Naive thymus-derived CD4-positive, alpha-beta T cell (primary cell): ENCODE measurements at regions of chr22 and their contacts with region 1.

Region 1: GRCh38 chr22:27919222-27919941 is at the start of gene PITPNB:
- DNase-seq: peak; percentile 97 to 100 (median 99)
- ATAC-seq: peak; percentile 95
- H3K4me3 ChIP-seq: peak within 1 kb of the TSS; percentile 84
- H3K4me3 Mint-ChIP-seq: peak within 1 kb of the TSS; percentile 97 to 100 (median 99)
- H3K27ac ChIP-seq: peak within 1 kb of the TSS; percentile 94
- H3K27ac Mint-ChIP-seq: peak within 1 kb of the TSS; percentile 93 to 99 (median 99)
- H3K4me1 ChIP-seq: peaks cover 29 to 32% of the 10 kb centered on the region in 2 donors
- H3K4me1 Mint-ChIP-seq: peaks cover 56 to 85% (median 75%) of the 10 kb centered on the region in 7 donors
- H3K27me3 ChIP-seq: no peaks in the 10 kb centered on the region
- H3K27me3 Mint-ChIP-seq: peaks cover 0 to 4% (median 0%) of the 10 kb centered on the region in 5 donors
- total RNA-seq, gene PITPNB: 56.3 to 98.8 (median 62.8) TPM

Region 2: DNA sequence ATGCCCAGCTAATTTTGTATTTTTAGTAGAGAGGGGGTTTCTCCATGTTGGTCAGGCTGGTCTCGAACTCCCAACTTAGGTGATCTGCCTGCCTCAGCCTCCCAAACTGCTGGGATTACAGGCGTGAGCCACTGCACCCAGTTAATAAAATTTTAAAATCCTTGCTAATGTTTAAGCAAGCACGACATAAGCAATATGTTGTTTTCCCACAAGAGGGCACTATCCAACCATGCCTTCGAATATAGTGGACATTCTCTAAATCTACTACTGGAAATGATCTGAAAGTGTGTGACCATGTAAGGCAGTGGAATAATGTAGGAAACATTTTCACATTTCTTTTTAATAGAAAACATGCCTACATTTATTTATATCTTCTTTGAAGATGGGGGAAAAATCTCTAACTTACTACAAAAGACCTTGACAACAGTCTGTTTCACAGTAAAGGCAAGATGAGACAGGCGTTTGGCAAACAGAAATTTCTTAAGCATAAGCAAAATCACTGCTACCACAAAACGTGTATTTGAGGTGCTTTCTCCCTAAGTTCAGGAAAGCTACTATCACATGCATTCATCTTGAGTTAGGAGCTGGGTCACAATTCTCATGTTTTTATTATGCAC is 38.5 kb before region 1 on chr22:
- CTCF ChIA-PET with region 1: interaction called, 3 read pairs
- POLR2A ChIA-PET with region 1: no interaction called
- intact Hi-C with region 1: loop called (anchors 2 to 5 kb)
- DNase-seq: peak in 5 of 9 donors; percentile 26 to 38 (median 38)
- ATAC-seq: peak; percentile 76
- H3K4me3 ChIP-seq: no peak overlapping the region
- H3K4me3 Mint-ChIP-seq: no peak overlapping the region
- H3K27ac ChIP-seq: no peak overlapping the region
- H3K27ac Mint-ChIP-seq: peak overlapping the region in 2 of 9 donors; percentile 2 to 11
- H3K4me1 ChIP-seq: peaks cover 0 to 13% of the 10 kb centered on the region in 2 donors
- H3K4me1 Mint-ChIP-seq: peaks cover 2 to 37% (median 24%) of the 10 kb centered on the region in 7 donors
- H3K27me3 ChIP-seq: no peaks in the 10 kb centered on the region
- H3K27me3 Mint-ChIP-seq: no peaks in the 10 kb centered on the region

Region 3: GRCh38 chr22:27885977-27886842 is 33.2 kb before region 1 on chr22:
- CTCF ChIA-PET with region 1: interaction called, 3 read pairs
- POLR2A ChIA-PET with region 1: interaction called, 3 read pairs
- intact Hi-C with region 1: loop called (anchors 2 to 5 kb)
- DNase-seq: peak in 7 of 9 donors; percentile 21 to 53 (median 36)
- ATAC-seq: peak; percentile 67
- H3K4me3 ChIP-seq: no peak overlapping the region
- H3K4me3 Mint-ChIP-seq: no peak overlapping the region
- H3K27ac ChIP-seq: no peak overlapping the region
- H3K27ac Mint-ChIP-seq: peak overlapping the region in 2 of 9 donors; percentile 18 to 33
- H3K4me1 ChIP-seq: no peaks in the 10 kb centered on the region
- H3K4me1 Mint-ChIP-seq: peaks cover 0 to 18% (median 6%) of the 10 kb centered on the region in 7 donors
- H3K27me3 ChIP-seq: no peaks in the 10 kb centered on the region
- H3K27me3 Mint-ChIP-seq: no peaks in the 10 kb centered on the region

Region 4: DNA sequence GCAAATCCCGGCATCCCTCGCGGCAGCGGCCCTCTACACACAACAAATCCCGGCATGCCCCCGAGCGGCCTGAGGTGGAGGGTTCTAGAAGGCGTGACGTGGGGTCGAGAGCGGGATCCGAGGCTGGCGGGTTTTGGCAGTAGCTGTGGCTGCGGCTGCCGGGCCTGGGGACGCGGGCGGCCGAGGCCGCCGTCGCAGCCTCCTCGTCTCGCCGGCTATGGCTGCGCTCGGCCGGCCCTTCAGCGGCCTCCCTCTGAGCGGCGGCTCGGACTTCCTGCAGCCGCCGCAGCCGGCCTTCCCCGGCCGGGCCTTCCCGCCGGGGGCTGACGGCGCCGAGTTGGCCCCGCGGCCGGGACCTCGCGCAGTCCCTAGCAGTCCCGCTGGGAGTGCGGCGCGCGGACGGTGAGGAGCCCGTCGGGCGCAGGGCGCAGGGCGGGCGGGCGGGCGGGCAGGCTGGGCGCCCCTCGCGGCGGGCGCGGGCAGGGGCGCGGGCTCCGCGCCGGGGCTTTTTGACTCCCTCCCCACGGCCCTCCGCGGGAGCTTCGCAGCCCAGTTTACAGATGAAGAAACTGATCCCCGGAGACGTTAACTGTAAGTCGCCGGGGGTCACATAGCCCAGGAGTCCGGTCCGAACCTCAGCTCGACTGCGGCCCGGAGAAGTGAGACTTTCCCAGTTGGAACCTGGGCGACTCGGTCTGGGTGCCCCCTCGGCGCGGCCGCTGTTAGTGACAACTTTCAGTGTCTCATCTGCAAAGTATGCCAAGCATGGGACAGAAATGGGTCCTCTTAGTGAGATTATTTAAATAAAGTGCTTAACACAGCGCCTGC is 853.5 kb after region 1 on chr22 and contains the start of gene CCDC117:
- CTCF ChIA-PET with region 1: no interaction called
- POLR2A ChIA-PET with region 1: no interaction called
- intact Hi-C with region 1: loop called in 1 of 2 experiments (anchors 1 kb)
- DNase-seq: peak; percentile 76 to 93 (median 88)
- ATAC-seq: peak; percentile 97
- H3K4me3 ChIP-seq: peak within 1 kb of the TSS; percentile 83
- H3K4me3 Mint-ChIP-seq: peak within 1 kb of the TSS; percentile 84 to 100 (median 97)
- H3K27ac ChIP-seq: peak within 1 kb of the TSS; percentile 91
- H3K27ac Mint-ChIP-seq: peak within 1 kb of the TSS; percentile 86 to 98 (median 91)
- H3K4me1 ChIP-seq: peaks cover 13 to 17% of the 10 kb centered on the region in 2 donors
- H3K4me1 Mint-ChIP-seq: peaks cover 17 to 46% (median 31%) of the 10 kb centered on the region in 7 donors
- H3K27me3 ChIP-seq: no peaks in the 10 kb centered on the region
- H3K27me3 Mint-ChIP-seq: peaks cover 0 to 2% (median 0%) of the 10 kb centered on the region in 5 donors
- total RNA-seq, gene CCDC117: 13.5 to 33.5 (median 21.2) TPM

Region 5: DNA sequence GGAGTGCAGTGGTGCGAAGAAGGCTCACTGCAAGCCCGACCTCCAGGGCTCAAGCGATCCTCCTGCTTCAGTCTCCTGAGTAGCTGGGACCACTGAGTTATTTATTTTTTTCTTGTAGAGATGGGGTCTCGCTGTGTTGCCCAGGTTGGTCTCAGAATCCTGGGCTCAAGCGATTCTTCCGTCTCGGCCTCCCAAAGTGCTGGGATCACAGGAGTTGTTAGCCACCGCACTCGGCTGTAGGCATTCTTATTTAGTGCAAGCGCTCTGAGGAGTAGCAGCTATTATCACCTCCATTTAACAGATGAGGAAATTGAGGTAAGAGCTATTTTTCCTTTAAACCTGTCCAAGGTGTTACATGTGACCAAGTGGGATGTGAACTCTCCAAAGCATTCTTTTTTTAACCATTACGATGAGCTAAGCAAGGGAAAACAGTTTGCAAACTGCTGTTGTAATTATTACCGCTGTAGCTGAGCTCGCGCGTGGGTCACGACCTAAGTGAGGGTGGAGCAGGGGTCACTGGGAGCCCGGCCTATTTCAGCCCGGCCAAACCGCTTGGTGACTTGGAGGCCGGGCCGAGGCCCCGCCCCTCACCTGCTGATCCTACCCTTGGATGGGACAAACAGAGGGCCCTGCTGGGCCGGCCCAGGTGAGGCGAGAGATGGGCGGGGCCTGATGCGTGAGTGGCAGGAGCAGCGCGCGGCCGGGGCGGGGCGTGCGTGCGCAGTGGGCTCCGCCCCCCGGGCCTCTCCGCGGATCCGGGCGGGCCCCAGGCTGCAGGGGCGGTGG is 1153.0 kb after region 1 on chr22:
- CTCF ChIA-PET with region 1: no interaction called
- POLR2A ChIA-PET with region 1: no interaction called
- intact Hi-C with region 1: loop called in 1 of 2 experiments (anchors 2 kb)
- DNase-seq: peak; percentile 72 to 87 (median 84)
- ATAC-seq: peak; percentile 98
- H3K4me3 ChIP-seq: peak overlapping the region; percentile 46
- H3K4me3 Mint-ChIP-seq: peak overlapping the region; percentile 69 to 90 (median 82)
- H3K27ac ChIP-seq: no peak overlapping the region
- H3K27ac Mint-ChIP-seq: peak overlapping the region in 1 of 9 donors; percentile 44
- H3K4me1 ChIP-seq: peaks cover 19 to 21% of the 10 kb centered on the region in 2 donors
- H3K4me1 Mint-ChIP-seq: peaks cover 15 to 26% (median 23%) of the 10 kb centered on the region in 7 donors
- H3K27me3 ChIP-seq: peaks cover 17 to 26% of the 10 kb centered on the region in 2 donors
- H3K27me3 Mint-ChIP-seq: peaks cover 40 to 69% (median 44%) of the 10 kb centered on the region in 5 donors